Posterior vena cava (tissue), 2 donors: ENCODE measurements at regions of chr3 and their contacts with region 1.

Region 1: GRCh38 chr3:4350789-4351163 is 47.6 kb downstream of the SETMAR start:
- DNase-seq: no peak

Region 2: DNA sequence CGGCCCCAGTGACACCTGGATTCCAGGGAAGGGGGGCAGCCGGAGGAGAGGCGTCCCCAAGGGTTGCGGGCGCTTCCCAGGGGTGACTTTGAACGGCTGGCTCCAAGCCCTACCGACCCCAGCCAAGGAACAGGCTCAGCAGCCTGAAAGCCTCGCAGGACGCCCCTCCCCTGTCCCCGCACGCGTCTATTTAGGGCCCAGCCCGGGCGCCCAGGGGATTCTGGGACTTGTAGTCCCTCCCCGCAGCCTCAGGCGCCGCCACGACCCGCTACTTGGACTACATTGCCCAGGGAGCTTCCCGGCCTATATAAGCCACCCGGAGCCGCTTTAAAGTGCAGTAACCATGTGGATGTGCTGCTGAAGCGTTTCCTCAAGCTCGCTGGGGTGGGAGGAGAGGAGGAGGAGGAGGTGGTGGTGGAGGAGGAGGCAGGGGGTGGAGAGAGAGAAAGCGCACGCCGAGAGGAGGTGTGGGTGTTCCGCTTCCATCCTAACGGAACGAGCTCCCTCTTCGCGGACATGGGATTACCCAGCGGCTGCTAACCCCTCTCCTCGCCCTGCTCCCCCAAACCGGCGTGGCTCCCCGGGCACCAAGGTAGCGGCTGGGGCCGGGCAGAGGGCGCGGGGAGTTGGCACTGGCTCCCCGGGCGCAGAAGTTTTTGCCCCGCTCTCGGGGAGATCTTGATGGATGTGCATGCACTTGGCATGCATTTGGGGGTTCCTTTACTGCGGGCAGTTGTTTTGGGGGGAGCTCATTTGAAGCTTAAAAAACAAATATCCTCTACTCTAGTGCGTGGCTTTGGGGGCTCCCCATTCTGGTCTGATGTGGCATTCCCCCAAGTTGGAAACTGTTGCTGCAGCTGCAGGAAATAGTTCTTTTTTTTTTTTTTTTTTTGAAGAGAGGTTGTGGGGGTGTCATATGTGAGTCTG is 142.5 kb after region 1 on chr3 and contains the start of gene ITPR1:
- intact Hi-C with region 1: loop called in 1 of 2 experiments (anchors 10 kb)
- DNase-seq: peak; percentile 99
- total RNA-seq, gene ITPR1: 136 to 147 TPM

Region 3: DNA sequence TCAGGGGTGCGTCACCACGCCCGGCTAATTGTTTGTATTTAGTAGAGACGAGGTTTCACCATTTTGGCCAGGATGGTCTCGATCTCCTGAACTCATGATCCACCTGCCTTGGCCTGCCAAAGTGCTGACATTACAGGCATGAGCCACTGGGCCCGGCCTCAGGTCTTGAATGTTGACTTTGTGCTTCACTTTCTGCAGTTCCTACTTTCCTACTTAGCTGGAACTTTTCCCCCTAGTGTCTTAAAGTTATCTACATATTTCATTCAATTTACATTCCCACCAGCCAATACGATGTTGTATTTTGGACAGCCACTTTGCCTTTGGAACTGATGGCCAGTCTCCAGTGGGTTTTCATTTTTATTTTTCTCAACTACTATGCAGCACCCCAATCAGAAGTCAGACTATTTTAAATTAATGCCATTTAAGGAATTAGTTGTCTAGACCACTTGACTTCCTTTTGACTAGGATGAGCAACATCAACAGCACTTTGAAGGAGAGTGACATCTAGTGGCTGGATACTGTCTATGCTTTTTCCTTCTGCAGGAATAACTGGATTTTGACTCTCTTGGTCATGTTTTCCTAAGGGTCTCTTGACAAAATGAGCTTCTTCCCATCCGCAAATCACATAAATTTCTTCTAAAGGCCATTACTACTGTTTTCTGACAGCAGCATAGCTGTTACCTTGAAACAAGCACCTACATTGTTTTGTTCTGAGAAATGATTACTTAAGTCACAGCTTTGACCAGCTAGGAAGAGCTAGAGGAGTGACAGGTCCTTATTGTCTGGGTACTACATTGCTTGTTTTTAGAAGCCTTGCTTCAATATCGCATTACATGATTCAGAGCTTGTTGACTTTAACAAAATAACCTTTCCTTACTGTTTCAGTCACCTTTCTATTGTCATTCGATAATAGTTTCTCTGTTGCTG is 282.6 kb after region 1 on chr3:
- intact Hi-C with region 1: loop called in 1 of 2 experiments (anchors 5 kb)
- DNase-seq: no peak

Region 4: GRCh38 chr3:4644951-4645350 is 294.2 kb after region 1 on chr3:
- intact Hi-C with region 1: loop called in 1 of 2 experiments (anchors 10 kb)
- DNase-seq: no peak